Activated B cell treated with CpG ODN at 0.5 μM for 24 hours (primary cell): ENCODE measurements at regions of chr17 and their contacts with region 1.

Region 1: GRCh38 chr17:57243171-57243948 is 13.0 kb upstream of the MSI2 start:
- DNase-seq: peak; percentile 59
- ATAC-seq: peak; percentile 84
- H3K4me3 Mint-ChIP-seq: no peak overlapping the region
- H3K27ac Mint-ChIP-seq: peak overlapping the region; percentile 30
- H3K4me1 Mint-ChIP-seq: no peaks in the 10 kb centered on the region
- H3K27me3 Mint-ChIP-seq: peaks cover 6% of the 10 kb centered on the region
- CTCF ChIP-seq: peak; percentile 89

Region 2: DNA sequence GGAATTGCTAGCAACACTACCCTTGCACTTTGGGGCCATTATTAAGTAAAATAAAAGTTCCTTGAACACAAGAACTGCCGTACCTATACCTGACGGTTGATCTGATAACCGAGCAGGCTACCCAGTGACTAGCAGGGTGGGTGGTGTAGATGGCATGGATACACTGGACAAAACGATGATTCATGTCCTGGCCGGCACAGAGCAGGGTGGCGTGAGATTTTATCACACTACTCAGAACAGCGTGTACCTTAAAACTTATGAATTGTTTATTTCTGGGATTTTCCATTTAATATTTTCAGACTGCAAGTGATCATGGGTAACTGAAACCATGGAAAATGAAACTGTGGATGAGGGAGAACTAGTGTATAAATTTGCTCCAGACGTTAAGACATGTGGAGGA is 28.0 kb before region 1 on chr17:
- CTCF ChIA-PET with region 1: no interaction called
- POLR2A ChIA-PET with region 1: no interaction called
- intact Hi-C with region 1: no loop called
- DNase-seq: no peak
- ATAC-seq: no peak
- H3K4me3 Mint-ChIP-seq: no peak overlapping the region
- H3K27ac Mint-ChIP-seq: no peak overlapping the region
- H3K4me1 Mint-ChIP-seq: no peaks in the 10 kb centered on the region
- H3K27me3 Mint-ChIP-seq: peaks cover 25% of the 10 kb centered on the region
- CTCF ChIP-seq: no peak

Region 3: GRCh38 chr17:57261084-57261461 is 17.7 kb after region 1 on chr17:
- CTCF ChIA-PET with region 1: interaction called, 26 read pairs
- POLR2A ChIA-PET with region 1: interaction called, 8 read pairs
- intact Hi-C with region 1: loop called (anchors 1 kb)
- DNase-seq: no peak
- ATAC-seq: no peak
- H3K4me3 Mint-ChIP-seq: peak overlapping the region; percentile 65
- H3K27ac Mint-ChIP-seq: peak overlapping the region; percentile 6
- H3K4me1 Mint-ChIP-seq: peaks cover 62% of the 10 kb centered on the region
- H3K27me3 Mint-ChIP-seq: no peaks in the 10 kb centered on the region
- CTCF ChIP-seq: no peak

Region 4: GRCh38 chr17:57408071-57408811 is 164.9 kb after region 1 on chr17:
- CTCF ChIA-PET with region 1: interaction called, 16 read pairs
- POLR2A ChIA-PET with region 1: no interaction called
- intact Hi-C with region 1: loop called (anchors 1 kb)
- DNase-seq: no peak
- ATAC-seq: peak; percentile 81
- H3K4me3 Mint-ChIP-seq: peak overlapping the region; percentile 55
- H3K27ac Mint-ChIP-seq: peak overlapping the region; percentile 74
- H3K4me1 Mint-ChIP-seq: peaks cover 25% of the 10 kb centered on the region
- H3K27me3 Mint-ChIP-seq: no peaks in the 10 kb centered on the region
- CTCF ChIP-seq: no peak

Region 5: DNA sequence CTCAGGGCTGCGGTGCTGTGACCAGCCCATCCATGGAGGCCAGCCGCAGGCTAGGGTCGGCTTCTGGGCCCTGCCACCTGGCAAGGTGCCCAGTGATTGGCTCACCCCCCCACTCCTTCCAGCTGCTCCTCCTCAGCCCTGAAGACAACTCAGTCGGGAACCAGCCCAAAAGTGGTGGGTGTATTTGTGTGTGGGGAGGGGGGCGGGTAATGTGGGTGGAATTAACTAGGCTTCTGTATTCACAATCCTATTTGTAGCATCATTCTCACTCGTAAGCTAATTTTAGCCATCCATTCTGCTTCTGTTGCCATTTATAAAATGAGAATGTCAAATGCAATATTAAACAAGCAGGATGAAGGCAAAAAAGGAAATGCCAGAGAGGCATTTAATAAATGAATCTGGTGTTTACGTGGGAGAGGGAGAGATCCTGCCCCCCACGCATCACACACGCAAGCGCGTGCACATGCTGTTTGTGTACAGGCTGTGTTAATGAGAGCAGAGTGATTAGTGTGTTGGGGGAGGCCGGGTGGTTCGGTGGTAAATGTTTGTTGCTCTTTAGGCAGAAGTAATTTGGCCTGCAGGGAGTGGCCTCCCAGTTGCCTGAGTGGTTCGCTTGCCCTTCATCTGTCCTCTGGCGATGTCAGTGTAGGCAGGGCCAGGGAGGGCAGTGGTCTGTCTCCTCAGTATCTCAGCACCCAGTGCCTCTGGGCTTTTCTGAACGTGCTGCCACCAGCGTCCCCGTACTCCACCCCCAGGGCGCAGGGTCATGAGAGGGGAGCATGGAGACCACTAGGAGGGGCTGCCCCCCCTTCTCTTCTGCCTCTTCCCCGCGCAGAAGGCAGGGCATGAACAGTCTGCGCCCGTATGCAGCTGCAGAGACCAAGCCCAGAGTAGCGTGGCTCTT is 361.7 kb after region 1 on chr17:
- CTCF ChIA-PET with region 1: interaction called, 5 read pairs
- POLR2A ChIA-PET with region 1: no interaction called
- intact Hi-C with region 1: loop called (anchors 2 kb)
- DNase-seq: peak; percentile 48
- ATAC-seq: peak; percentile 76
- H3K4me3 Mint-ChIP-seq: peak overlapping the region; percentile 72
- H3K27ac Mint-ChIP-seq: peak overlapping the region; percentile 86
- H3K4me1 Mint-ChIP-seq: peaks cover 56% of the 10 kb centered on the region
- H3K27me3 Mint-ChIP-seq: no peaks in the 10 kb centered on the region
- CTCF ChIP-seq: no peak

Region 6: GRCh38 chr17:57747221-57748017 is 504.1 kb after region 1 on chr17:
- CTCF ChIA-PET with region 1: interaction called, 84 read pairs
- POLR2A ChIA-PET with region 1: no interaction called
- intact Hi-C with region 1: loop called (anchors 1 kb)
- DNase-seq: no peak
- ATAC-seq: peak; percentile 74
- H3K4me3 Mint-ChIP-seq: no peak overlapping the region
- H3K27ac Mint-ChIP-seq: no peak overlapping the region
- H3K4me1 Mint-ChIP-seq: peaks cover 17% of the 10 kb centered on the region
- H3K27me3 Mint-ChIP-seq: peaks cover 7% of the 10 kb centered on the region
- CTCF ChIP-seq: no peak

Region 7: GRCh38 chr17:58112970-58113631 is 869.7 kb after region 1 on chr17:
- CTCF ChIA-PET with region 1: no interaction called
- POLR2A ChIA-PET with region 1: no interaction called
- intact Hi-C with region 1: loop called (anchors 1 kb)
- DNase-seq: peak; percentile 68
- ATAC-seq: peak; percentile 95
- H3K4me3 Mint-ChIP-seq: no peak overlapping the region
- H3K27ac Mint-ChIP-seq: no peak overlapping the region
- H3K4me1 Mint-ChIP-seq: no peaks in the 10 kb centered on the region
- H3K27me3 Mint-ChIP-seq: peaks cover 25% of the 10 kb centered on the region
- CTCF ChIP-seq: peak; percentile 53